Naive thymus-derived CD4-positive, alpha-beta T cell (primary cell): ENCODE measurements at regions of chr1 and their contacts with region 1.

Region 1: GRCh38 chr1:23367791-23368561 is 1.7 kb downstream of the ZNF436 start:
- DNase-seq: peak; percentile 84 to 98 (median 96)
- ATAC-seq: peak; percentile 95
- H3K4me3 ChIP-seq: peak overlapping the region; percentile 100
- H3K4me3 Mint-ChIP-seq: peak overlapping the region; percentile 87 to 100 (median 97)
- H3K27ac ChIP-seq: peak overlapping the region; percentile 91
- H3K27ac Mint-ChIP-seq: peak overlapping the region; percentile 93 to 99 (median 97)
- H3K4me1 ChIP-seq: peaks cover 6 to 8% of the 10 kb centered on the region in 2 donors
- H3K4me1 Mint-ChIP-seq: peaks cover 25 to 41% (median 36%) of the 10 kb centered on the region in 7 donors
- H3K27me3 ChIP-seq: no peaks in the 10 kb centered on the region
- H3K27me3 Mint-ChIP-seq: no peaks in the 10 kb centered on the region

Region 2: DNA sequence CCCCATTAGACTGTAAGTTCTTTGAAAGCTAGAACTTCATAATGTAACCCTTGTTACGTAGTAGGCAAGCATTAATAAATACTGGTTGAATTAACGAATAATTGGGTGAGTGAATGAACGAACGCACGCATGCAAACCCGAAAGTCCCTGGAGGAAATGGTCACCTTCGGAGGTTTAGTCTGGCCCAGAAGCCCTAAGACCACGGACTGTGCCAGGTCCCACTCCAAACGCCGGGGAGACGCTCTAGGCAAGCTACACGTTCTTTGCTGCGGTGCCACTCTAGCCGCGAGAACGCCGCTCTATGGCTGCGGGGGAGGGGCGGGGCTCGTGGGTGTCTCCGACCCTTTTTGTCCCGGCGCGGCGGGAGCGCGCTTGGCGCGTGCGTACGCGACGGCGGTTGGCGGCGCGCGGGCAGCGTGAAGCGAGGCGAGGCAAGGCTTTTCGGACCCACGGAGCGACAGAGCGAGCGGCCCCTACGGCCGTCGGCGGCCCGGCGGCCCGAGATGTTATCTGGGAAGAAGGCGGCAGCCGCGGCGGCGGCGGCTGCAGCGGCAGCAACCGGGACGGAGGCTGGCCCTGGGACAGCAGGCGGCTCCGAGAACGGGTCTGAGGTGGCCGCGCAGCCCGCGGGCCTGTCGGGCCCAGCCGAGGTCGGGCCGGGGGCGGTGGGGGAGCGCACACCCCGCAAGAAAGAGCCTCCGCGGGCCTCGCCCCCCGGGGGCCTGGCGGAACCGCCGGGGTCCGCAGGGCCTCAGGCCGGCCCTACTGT is 348.7 kb before region 1 on chr1 and contains the start of gene KDM1A:
- CTCF ChIA-PET with region 1: no interaction called
- POLR2A ChIA-PET with region 1: no interaction called
- intact Hi-C with region 1: loop called (anchors 1 kb)
- DNase-seq: peak; percentile 88 to 95 (median 92)
- ATAC-seq: peak; percentile 99
- H3K4me3 ChIP-seq: peak within 1 kb of the TSS; percentile 84
- H3K4me3 Mint-ChIP-seq: peak within 1 kb of the TSS; percentile 87 to 98 (median 98)
- H3K27ac ChIP-seq: peak within 1 kb of the TSS; percentile 76
- H3K27ac Mint-ChIP-seq: peak within 1 kb of the TSS; percentile 86 to 98 (median 93)
- H3K4me1 ChIP-seq: peaks cover 4 to 14% of the 10 kb centered on the region in 2 donors
- H3K4me1 Mint-ChIP-seq: peaks cover 16 to 52% (median 46%) of the 10 kb centered on the region in 7 donors
- H3K27me3 ChIP-seq: no peaks in the 10 kb centered on the region
- H3K27me3 Mint-ChIP-seq: no peaks in the 10 kb centered on the region
- total RNA-seq, gene KDM1A: 40.6 to 56.0 (median 47.7) TPM

Region 3: DNA sequence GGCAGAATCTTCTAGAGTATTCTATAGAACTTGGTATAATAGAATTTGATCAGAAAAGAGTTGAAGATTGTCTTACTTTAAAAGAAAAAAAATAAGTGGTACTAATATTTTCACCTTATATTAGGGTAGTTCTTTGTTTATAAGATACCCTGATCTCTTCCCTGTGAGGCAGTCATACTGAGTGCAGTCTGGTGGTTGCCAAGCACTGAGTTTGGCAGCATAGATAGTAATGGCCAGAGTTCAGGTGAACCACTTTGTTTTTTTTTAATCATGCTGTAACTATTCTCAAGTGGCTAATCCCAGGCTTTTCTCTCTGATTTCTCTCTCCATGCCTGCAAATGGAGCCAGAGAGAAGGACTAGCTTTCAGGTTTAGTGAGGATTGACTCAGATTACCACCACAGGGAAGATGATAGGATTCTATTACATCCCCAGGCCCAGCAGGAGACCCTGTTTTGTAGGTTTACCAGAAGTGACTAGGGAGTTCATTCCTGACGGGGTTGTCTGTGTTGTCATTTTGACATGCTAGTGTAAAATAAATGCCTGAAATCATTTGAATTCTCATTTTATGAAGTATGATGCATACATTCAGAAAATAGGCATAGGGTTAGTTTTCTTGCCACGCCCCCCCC is 332.0 kb before region 1 on chr1:
- CTCF ChIA-PET with region 1: no interaction called
- POLR2A ChIA-PET with region 1: no interaction called
- intact Hi-C with region 1: no loop called
- DNase-seq: no peak
- ATAC-seq: no peak
- H3K4me3 ChIP-seq: no peak overlapping the region
- H3K4me3 Mint-ChIP-seq: no peak overlapping the region
- H3K27ac ChIP-seq: no peak overlapping the region
- H3K27ac Mint-ChIP-seq: no peak overlapping the region
- H3K4me1 ChIP-seq: no peaks in the 10 kb centered on the region
- H3K4me1 Mint-ChIP-seq: peaks cover 27 to 80% (median 59%) of the 10 kb centered on the region in 7 donors
- H3K27me3 ChIP-seq: no peaks in the 10 kb centered on the region
- H3K27me3 Mint-ChIP-seq: no peaks in the 10 kb centered on the region

Region 4: GRCh38 chr1:23403735-23404486 is 35.9 kb after region 1 on chr1:
- CTCF ChIA-PET with region 1: no interaction called
- POLR2A ChIA-PET with region 1: no interaction called
- intact Hi-C with region 1: loop called (anchors 1 to 2 kb)
- DNase-seq: peak; percentile 62 to 83 (median 73)
- ATAC-seq: peak; percentile 92
- H3K4me3 ChIP-seq: no peak overlapping the region
- H3K4me3 Mint-ChIP-seq: no peak overlapping the region
- H3K27ac ChIP-seq: no peak overlapping the region
- H3K27ac Mint-ChIP-seq: peak overlapping the region in 5 of 9 donors; percentile 16 to 76 (median 51)
- H3K4me1 ChIP-seq: peaks cover 4 to 9% of the 10 kb centered on the region in 2 donors
- H3K4me1 Mint-ChIP-seq: peaks cover 10 to 14% (median 12%) of the 10 kb centered on the region in 7 donors
- H3K27me3 ChIP-seq: no peaks in the 10 kb centered on the region
- H3K27me3 Mint-ChIP-seq: no peaks in the 10 kb centered on the region

Region 5: GRCh38 chr1:23530747-23531561 is 163.0 kb after region 1 on chr1 and contains the start of gene E2F2:
- CTCF ChIA-PET with region 1: no interaction called
- POLR2A ChIA-PET with region 1: no interaction called
- intact Hi-C with region 1: loop called (anchors 2 kb)
- DNase-seq: peak; percentile 61 to 81 (median 78)
- ATAC-seq: peak; percentile 83
- H3K4me3 ChIP-seq: peak within 1 kb of the TSS; percentile 52
- H3K4me3 Mint-ChIP-seq: peak within 1 kb of the TSS; percentile 85 to 97 (median 90)
- H3K27ac ChIP-seq: no peak within 1 kb of the TSS
- H3K27ac Mint-ChIP-seq: peak within 1 kb of the TSS in 7 of 9 donors; percentile 36 to 96 (median 70)
- H3K4me1 ChIP-seq: peaks cover 61 to 71% of the 10 kb centered on the region in 2 donors
- H3K4me1 Mint-ChIP-seq: peaks cover 49 to 76% (median 67%) of the 10 kb centered on the region in 7 donors
- H3K27me3 ChIP-seq: no peaks in the 10 kb centered on the region
- H3K27me3 Mint-ChIP-seq: peaks cover 0 to 4% (median 0%) of the 10 kb centered on the region in 5 donors
- total RNA-seq, gene E2F2: 0.14 to 65.7 (median 2.5) TPM in 4 of 5 experiments, not detected in the other

Region 6: GRCh38 chr1:23619299-23620188 is 251.6 kb after region 1 on chr1:
- CTCF ChIA-PET with region 1: no interaction called
- POLR2A ChIA-PET with region 1: no interaction called
- intact Hi-C with region 1: loop called in 1 of 2 experiments (anchors 10 kb)
- DNase-seq: peak; percentile 58 to 88 (median 84)
- ATAC-seq: peak; percentile 93
- H3K4me3 ChIP-seq: peak overlapping the region; percentile 65
- H3K4me3 Mint-ChIP-seq: peak overlapping the region; percentile 63 to 85 (median 78)
- H3K27ac ChIP-seq: peak overlapping the region; percentile 81
- H3K27ac Mint-ChIP-seq: peak overlapping the region; percentile 84 to 99 (median 97)
- H3K4me1 ChIP-seq: peaks cover 45 to 79% of the 10 kb centered on the region in 2 donors
- H3K4me1 Mint-ChIP-seq: peaks cover 68 to 97% (median 90%) of the 10 kb centered on the region in 7 donors
- H3K27me3 ChIP-seq: no peaks in the 10 kb centered on the region
- H3K27me3 Mint-ChIP-seq: peaks cover 0 to 11% (median 0%) of the 10 kb centered on the region in 5 donors

Region 7: DNA sequence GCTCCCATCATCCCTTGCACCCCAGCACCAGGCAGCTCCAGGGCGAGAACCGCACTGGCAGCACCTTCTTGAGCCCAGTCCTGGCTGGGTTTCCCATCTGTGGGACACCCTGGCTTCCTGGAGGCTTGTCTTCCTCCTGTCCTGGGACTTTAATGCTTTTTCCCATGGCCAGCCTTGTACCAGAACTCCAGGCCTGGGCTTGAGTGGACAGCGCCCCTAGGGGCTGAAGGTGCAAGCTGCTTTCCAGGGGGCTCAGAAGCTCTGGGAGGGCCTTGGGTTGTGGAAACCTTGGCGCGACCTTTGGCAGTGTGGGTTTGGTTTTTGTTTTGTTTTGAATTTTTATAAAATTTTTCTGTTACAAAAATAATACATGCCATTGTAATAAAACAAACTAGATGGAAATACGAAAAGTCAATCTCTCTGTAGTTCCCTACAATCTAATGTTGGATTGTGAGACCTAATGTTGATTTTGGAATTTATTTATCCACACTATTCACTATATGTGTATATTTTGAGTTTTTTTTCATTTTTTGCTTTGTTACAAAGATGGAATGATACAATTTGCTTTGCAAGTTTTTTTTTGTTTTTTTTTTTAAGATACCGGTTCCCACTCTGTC is 289.8 kb after region 1 on chr1:
- CTCF ChIA-PET with region 1: no interaction called
- POLR2A ChIA-PET with region 1: no interaction called
- intact Hi-C with region 1: no loop called
- DNase-seq: peak in 3 of 9 donors; percentile 14 to 34 (median 23)
- ATAC-seq: peak; percentile 72
- H3K4me3 ChIP-seq: no peak overlapping the region
- H3K4me3 Mint-ChIP-seq: no peak overlapping the region
- H3K27ac ChIP-seq: no peak overlapping the region
- H3K27ac Mint-ChIP-seq: no peak overlapping the region
- H3K4me1 ChIP-seq: no peaks in the 10 kb centered on the region
- H3K4me1 Mint-ChIP-seq: peaks cover 0 to 3% (median 0%) of the 10 kb centered on the region in 7 donors
- H3K27me3 ChIP-seq: no peaks in the 10 kb centered on the region
- H3K27me3 Mint-ChIP-seq: peaks cover 0 to 12% (median 0%) of the 10 kb centered on the region in 5 donors

Region 8: DNA sequence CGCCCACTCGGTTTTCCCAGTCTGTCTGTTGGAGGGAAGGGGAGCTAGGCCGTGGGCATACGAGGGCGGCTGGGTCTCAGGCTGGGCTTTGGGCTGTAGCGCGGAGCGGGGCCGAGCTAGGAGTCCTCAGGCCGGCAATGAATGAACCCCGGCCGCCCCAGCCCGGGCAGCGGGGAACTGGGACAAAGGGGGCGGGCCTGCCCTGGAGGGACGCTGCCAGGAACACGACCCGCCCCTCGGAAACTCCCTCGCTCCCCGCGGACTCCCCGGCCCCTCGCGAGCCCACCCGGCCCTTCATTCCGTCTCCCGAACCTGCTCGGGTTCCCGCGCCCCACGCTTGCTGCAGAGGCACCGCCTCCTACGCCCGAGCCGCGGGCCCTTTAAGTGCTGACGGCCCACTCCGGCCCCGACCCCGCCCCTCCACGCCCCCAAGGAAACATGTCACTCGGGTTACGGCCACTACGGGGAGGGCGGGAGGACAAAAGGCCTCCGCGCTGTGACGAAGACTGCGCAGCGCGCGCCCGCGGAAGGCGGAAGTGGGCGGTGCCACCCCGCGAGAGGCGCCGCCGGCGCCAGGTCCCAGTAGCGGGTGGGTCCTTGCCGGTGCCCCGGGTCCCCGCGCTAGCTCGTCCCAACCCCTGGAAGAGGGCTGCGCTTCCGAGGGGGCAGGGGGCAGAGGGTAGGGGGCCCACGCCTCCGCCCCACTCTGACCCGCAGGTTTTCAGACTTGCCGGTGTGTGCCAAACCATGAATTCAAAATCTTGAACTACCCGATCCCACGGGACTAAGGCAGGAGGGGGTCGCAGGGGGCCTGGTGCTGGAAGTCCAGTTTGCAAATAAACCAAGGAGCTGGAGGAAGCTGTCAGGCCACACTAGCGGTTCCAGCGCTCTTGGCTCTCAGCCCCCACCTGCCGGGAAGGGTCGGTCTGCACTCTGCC is 432.7 kb after region 1 on chr1 and contains the start of gene GALE:
- CTCF ChIA-PET with region 1: no interaction called
- POLR2A ChIA-PET with region 1: no interaction called
- intact Hi-C with region 1: loop called in 1 of 2 experiments (anchors 1 kb)
- DNase-seq: peak; percentile 87 to 96 (median 94)
- ATAC-seq: peak; percentile 97
- H3K4me3 ChIP-seq: peak within 1 kb of the TSS; percentile 84
- H3K4me3 Mint-ChIP-seq: peak within 1 kb of the TSS; percentile 79 to 94 (median 88)
- H3K27ac ChIP-seq: peak within 1 kb of the TSS; percentile 91
- H3K27ac Mint-ChIP-seq: peak within 1 kb of the TSS; percentile 81 to 95 (median 92)
- H3K4me1 ChIP-seq: peaks cover 7 to 15% of the 10 kb centered on the region in 2 donors
- H3K4me1 Mint-ChIP-seq: peaks cover 6 to 25% (median 15%) of the 10 kb centered on the region in 7 donors
- H3K27me3 ChIP-seq: no peaks in the 10 kb centered on the region
- H3K27me3 Mint-ChIP-seq: no peaks in the 10 kb centered on the region
- total RNA-seq, gene GALE: 8.1 to 21.4 (median 12.7) TPM